ENCODE measurements at regions of chr4 and their contacts with region 1.

Region 1: DNA sequence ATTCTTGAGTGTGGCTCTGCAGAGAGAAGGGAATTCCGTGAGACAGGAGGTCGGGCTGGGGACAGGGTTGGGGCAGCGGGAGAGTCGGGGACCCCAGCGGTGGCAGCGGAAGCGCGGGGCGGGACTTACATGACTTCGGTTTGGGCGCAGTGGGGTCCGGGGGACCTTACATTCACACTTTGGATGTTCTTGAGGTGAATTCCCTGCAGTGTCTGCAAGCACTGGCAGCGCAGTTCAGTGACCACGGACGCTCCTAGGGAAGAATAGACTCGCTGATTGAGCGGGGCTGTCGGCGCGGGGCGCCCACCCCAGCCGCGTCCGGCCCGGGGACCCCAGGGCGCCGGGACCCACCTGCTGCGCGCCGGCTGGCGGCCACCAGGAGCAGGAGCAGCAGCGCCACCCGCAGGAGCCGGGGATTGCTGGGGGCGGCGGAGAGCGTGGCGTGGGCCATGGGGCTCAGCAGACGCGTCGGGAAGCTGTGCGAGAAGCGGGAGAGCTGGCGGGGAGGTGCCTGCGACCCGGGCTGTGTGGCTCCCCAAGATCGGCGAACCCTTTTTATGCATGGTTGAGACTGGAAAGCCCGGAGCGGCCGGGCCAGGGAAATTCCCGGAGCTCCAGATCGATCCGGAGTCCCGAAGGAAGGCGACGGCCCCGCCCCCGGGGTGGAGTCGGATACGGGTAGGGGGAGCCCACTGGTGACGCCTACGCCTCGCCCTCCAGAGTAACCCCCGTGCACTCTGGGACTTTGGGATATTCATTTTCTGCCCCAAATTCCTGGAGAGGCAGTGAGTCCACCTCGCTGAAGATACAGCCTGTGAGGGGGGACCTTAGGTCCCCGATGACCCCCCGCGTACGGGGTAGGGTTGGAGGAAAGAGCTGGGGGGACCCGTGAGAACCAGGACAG is at the start of gene CXCL3:
- DNase-seq: peak in 1 of 2 experiments; percentile 88
- H3K4me3 ChIP-seq: peak within 1 kb of the TSS; percentile 61 to 92 (median 73)
- H3K27ac ChIP-seq: 0 out of 2 replicates have a peak within 1 kb of the TSS, but pooled peaks have one; percentile 47
- H3K4me1 ChIP-seq: peaks cover 1 to 14% (median 4%) of the 10 kb centered on the region in 4 experiments; a peak in 4 of 7 replicates
- H3K27me3 ChIP-seq: no peaks in the 10 kb centered on the region
- CTCF ChIP-seq: peak in 2 of 3 experiments; percentile 1 to 26; a peak in 3 of 4 replicates
- EP300 ChIP-seq: no peak
- POLR2A ChIP-seq: peak in 1 of 2 experiments; percentile 64; a peak in 2 of 3 replicates
- RAD21 ChIP-seq: peak in 1 of 2 experiments; percentile 28; a peak in 1 of 4 replicates
- total RNA-seq, gene CXCL3: 5.2 TPM in 2 replicates

Region 2: DNA sequence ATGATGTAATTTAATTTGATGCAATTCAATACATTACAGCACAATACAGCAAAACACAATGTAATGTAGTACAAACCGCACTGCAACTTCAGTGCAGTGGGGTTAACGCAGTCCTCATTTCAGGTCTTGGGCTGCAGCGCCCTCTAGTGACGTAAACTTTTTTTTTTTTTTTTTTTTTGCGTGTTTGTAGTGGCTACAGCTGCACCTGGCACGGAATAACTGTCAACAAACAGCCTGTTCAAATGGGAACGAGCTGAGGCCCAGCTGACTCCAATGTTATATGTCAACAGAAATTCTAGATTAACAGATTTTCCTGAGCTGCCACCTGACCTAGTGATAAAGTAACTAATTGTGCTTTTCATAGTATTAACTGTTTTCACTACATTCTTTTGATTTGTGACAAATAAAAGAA is 384.7 kb before region 1 on chr4:
- CTCF ChIA-PET with region 1: no interaction called
- POLR2A ChIA-PET with region 1: no interaction called
- DNase-seq: no peak
- H3K4me3 ChIP-seq: no peak overlapping the region
- H3K27ac ChIP-seq: no peak overlapping the region
- H3K4me1 ChIP-seq: no peaks in the 10 kb centered on the region
- H3K27me3 ChIP-seq: peaks cover 0 to 2% (median 0%) of the 10 kb centered on the region in 4 experiments; a peak in 1 of 7 replicates
- CTCF ChIP-seq: peak; percentile 17 to 70 (median 44)
- EP300 ChIP-seq: no peak
- POLR2A ChIP-seq: no peak
- RAD21 ChIP-seq: peak; percentile 89 to 90

Region 3: GRCh38 chr4:74006009-74006476 is 32.4 kb before region 1 on chr4:
- CTCF ChIA-PET with region 1: interaction called, 18 read pairs
- POLR2A ChIA-PET with region 1: interaction called, 5 read pairs
- DNase-seq: no peak
- H3K4me3 ChIP-seq: no peak overlapping the region
- H3K27ac ChIP-seq: no peak overlapping the region
- H3K4me1 ChIP-seq: peaks cover 0 to 2% (median 0%) of the 10 kb centered on the region in 4 experiments; a peak in 1 of 7 replicates
- H3K27me3 ChIP-seq: no peaks in the 10 kb centered on the region
- CTCF ChIP-seq: no peak
- EP300 ChIP-seq: no peak
- POLR2A ChIP-seq: no peak
- RAD21 ChIP-seq: no peak

Region 4: GRCh38 chr4:74159143-74159709 is 120.8 kb after region 1 on chr4:
- CTCF ChIA-PET with region 1: no interaction called
- POLR2A ChIA-PET with region 1: no interaction called
- DNase-seq: no peak
- H3K4me3 ChIP-seq: peak overlapping the region in 3 of 4 experiments; percentile 72 to 82 (median 81); a peak in 5 of 8 replicates
- H3K27ac ChIP-seq: no peak overlapping the region
- H3K4me1 ChIP-seq: peaks cover 0 to 4% (median 2%) of the 10 kb centered on the region in 4 experiments; a peak in 2 of 7 replicates
- H3K27me3 ChIP-seq: no peaks in the 10 kb centered on the region
- CTCF ChIP-seq: no peak
- EP300 ChIP-seq: no peak
- POLR2A ChIP-seq: no peak
- RAD21 ChIP-seq: no peak